Activated CD8-positive, alpha-beta T cell treated with anti-CD3 and anti-CD28 coated beads for 36 hours (primary cell): ENCODE measurements at regions of chr17 and their contacts with region 1.

Region 1: GRCh38 chr17:48618256-48618897 is 3.3 kb upstream of the HOXB8 start:
- DNase-seq: peak; percentile 83
- ATAC-seq: peak; percentile 69
- H3K4me3 Mint-ChIP-seq: peak overlapping the region; percentile 46
- H3K27ac Mint-ChIP-seq: no peak overlapping the region
- H3K4me1 Mint-ChIP-seq: peaks cover 32% of the 10 kb centered on the region
- H3K27me3 Mint-ChIP-seq: peaks cover 86% of the 10 kb centered on the region
- CTCF ChIP-seq: peak; percentile 99

Region 2: GRCh38 chr17:48246612-48247011 is 371.8 kb before region 1 on chr17:
- CTCF ChIA-PET with region 1: no interaction called
- POLR2A ChIA-PET with region 1: no interaction called
- intact Hi-C with region 1: no loop called
- DNase-seq: no peak
- ATAC-seq: no peak
- H3K4me3 Mint-ChIP-seq: no peak overlapping the region
- H3K27ac Mint-ChIP-seq: no peak overlapping the region
- H3K4me1 Mint-ChIP-seq: peaks cover 41% of the 10 kb centered on the region
- H3K27me3 Mint-ChIP-seq: no peaks in the 10 kb centered on the region
- CTCF ChIP-seq: no peak

Region 3: DNA sequence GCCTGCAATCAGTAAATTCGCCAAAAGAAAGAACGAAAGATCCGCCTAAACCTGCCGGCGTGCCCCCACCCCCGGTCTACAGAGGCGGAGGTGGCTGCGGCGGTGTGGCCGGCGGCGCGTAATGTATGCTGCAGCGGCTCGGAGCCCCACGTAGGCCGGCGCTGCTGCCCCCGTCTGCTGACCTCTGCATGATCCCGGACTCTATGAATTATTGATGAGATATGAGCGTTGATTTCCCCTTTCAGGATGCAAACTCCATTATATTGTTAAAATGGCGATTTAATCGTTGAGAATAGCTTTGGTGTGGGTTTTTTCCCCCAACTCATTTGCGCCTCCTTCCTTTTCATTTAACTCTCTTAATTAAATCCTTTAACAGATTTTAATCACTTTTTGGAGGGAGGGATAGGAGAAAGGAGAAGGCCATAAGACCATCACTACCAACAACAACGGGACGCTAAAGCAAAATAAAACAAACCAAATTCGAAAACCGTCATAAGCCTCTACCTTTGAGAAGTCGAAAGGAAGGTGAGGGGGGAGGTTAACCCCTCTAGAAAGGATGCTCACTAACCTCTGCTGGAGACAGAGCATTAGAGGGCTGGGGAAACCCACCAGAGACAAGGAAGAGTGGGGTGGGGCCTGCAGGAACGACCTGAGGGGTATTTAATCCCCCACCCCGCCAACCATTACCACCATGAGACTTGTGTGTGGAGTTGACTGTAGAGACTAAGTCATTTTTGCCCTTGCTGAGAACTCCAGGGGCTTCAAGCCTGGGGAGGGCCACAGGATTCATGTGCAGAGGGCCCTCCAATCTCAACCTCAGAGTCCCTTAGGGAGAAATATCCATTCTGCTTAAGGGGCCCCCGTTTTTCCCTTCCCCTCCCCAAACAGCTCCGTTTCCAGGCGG is 31.8 kb before region 1 on chr17:
- CTCF ChIA-PET with region 1: interaction called, 40 read pairs
- POLR2A ChIA-PET with region 1: interaction called, 3 read pairs
- intact Hi-C with region 1: no loop called
- DNase-seq: peak; percentile 73
- ATAC-seq: peak; percentile 32
- H3K4me3 Mint-ChIP-seq: peak overlapping the region; percentile 89
- H3K27ac Mint-ChIP-seq: no peak overlapping the region
- H3K4me1 Mint-ChIP-seq: peaks cover 27% of the 10 kb centered on the region
- H3K27me3 Mint-ChIP-seq: peaks cover 89% of the 10 kb centered on the region
- CTCF ChIP-seq: no peak